GM13977 (cell line): ENCODE measurements at regions of chr15 and their contacts with region 1.

Region 1: GRCh38 chr15:89177633-89178306 is 43.6 kb downstream of the RLBP1 start:
- DNase-seq: peak; percentile 59
- CTCF ChIP-seq: peak; percentile 87

Region 2: GRCh38 chr15:88904624-88905327 is 273.0 kb before region 1 on chr15:
- in situ Hi-C with region 1: loop called (anchors 25 kb)
- DNase-seq: peak; percentile 85
- CTCF ChIP-seq: peak; percentile 95

Region 3: DNA sequence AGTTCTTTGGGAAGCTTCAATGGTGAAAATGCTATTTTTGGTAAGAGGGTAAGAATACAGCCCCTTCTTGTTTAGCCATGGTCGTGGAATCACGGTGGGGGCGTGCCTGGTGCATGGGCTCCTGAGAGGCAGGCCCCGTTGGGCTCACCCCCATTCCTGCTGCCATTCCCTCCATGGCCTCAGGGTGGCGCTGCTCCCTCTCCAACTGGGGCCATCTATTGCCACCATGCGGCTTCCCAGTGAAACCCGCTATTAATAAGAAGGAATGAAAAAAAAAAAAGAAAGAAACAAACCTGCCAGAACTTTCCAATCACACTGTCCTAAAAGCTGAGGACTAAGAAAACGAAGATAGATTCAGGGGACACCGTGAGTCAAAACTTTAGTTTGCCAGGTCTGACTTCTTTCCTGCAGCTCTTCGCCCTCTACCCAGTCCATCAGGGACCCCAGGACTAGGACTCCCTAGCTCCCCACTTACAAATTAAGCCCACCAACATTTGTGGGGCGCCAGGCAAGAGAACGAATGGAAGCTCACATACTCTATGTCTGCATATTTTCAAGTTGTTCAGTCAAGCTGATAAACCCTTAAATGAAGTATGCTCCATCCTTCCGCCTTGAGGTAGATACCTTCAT is 120.2 kb before region 1 on chr15:
- in situ Hi-C with region 1: loop called (anchors 5 kb)
- DNase-seq: peak; percentile 78
- CTCF ChIP-seq: peak; percentile 99